Naive thymus-derived CD4-positive, alpha-beta T cell (primary cell): ENCODE measurements at regions of chr3 and their contacts with region 1.

Region 1: GRCh38 chr3:100463002-100463401 is 29.4 kb upstream of the TMEM45A start:
- DNase-seq: no peak
- ATAC-seq: peak; percentile 75
- H3K4me3 ChIP-seq: no peak overlapping the region
- H3K4me3 Mint-ChIP-seq: peak overlapping the region in 1 of 10 donors; percentile 18
- H3K27ac ChIP-seq: no peak overlapping the region
- H3K27ac Mint-ChIP-seq: no peak overlapping the region
- H3K4me1 ChIP-seq: no peaks in the 10 kb centered on the region
- H3K4me1 Mint-ChIP-seq: peaks cover 0 to 19% (median 0%) of the 10 kb centered on the region in 7 donors
- H3K27me3 ChIP-seq: no peaks in the 10 kb centered on the region
- H3K27me3 Mint-ChIP-seq: peaks cover 0 to 8% (median 3%) of the 10 kb centered on the region in 5 donors

Region 2: DNA sequence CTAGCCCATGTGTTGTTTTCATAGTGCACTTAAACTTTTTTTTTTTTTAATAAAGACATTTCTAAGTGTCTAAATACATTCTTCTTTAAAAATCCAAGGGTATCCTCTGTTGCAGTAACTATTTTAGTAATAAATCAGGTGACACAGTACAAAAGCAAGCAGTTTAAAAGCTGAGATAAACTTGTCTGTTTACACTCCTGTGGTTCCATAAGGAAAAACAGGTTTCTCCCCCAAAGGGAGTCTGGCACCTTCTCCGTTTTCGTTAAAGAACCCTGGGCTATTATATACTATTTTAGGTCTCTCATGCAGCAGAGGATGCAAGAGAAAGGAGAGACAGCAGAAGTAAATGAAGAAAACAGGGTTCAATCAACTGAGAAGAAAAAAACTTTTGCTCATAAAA is 13.8 kb before region 1 on chr3:
- CTCF ChIA-PET with region 1: no interaction called
- POLR2A ChIA-PET with region 1: no interaction called
- intact Hi-C with region 1: no loop called
- DNase-seq: no peak
- ATAC-seq: no peak
- H3K4me3 ChIP-seq: no peak overlapping the region
- H3K4me3 Mint-ChIP-seq: no peak overlapping the region
- H3K27ac ChIP-seq: no peak overlapping the region
- H3K27ac Mint-ChIP-seq: no peak overlapping the region
- H3K4me1 ChIP-seq: no peaks in the 10 kb centered on the region
- H3K4me1 Mint-ChIP-seq: no peaks in the 10 kb centered on the region
- H3K27me3 ChIP-seq: no peaks in the 10 kb centered on the region
- H3K27me3 Mint-ChIP-seq: no peaks in the 10 kb centered on the region

Region 3: DNA sequence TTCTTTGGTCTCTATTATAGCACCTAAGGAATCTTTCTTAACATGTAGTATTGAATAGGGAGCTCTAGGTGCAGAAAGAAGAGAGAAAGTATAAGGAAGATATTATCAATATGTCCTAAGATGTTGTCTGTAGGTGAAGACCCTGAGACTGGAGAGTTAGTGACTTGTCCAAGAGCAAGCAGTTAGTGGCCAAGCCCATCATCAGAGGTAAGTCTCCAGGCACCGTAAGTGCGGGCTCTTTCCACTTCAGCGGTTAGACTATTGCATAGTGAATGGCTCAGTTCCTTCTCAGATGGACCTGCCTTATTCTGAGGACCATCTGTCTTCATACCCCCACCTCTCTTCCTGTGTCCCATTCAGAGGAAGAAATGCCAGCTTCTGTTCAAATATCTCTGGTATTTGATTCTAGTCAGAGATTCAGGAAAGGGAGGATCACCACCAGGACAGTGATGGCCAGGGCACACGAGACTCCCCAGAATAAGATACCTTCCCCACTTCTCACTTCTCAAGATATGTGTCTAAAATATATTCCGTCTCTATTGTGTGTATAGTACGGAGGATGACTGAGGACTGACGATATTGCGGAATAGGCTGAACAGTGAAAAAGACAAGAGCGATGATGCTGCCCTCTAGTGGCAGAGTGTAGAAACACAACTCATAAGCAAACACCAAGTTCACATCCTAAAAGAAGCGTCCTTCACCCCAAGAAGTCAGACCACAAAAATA is 127.3 kb after region 1 on chr3:
- CTCF ChIA-PET with region 1: interaction called, 7 read pairs
- POLR2A ChIA-PET with region 1: no interaction called
- intact Hi-C with region 1: loop called (anchors 1 kb)
- DNase-seq: peak; percentile 24 to 73 (median 61)
- ATAC-seq: peak; percentile 98
- H3K4me3 ChIP-seq: no peak overlapping the region
- H3K4me3 Mint-ChIP-seq: peak overlapping the region in 7 of 10 donors; percentile 13 to 77 (median 60)
- H3K27ac ChIP-seq: no peak overlapping the region
- H3K27ac Mint-ChIP-seq: no peak overlapping the region
- H3K4me1 ChIP-seq: no peaks in the 10 kb centered on the region
- H3K4me1 Mint-ChIP-seq: peaks cover 0 to 8% (median 4%) of the 10 kb centered on the region in 7 donors
- H3K27me3 ChIP-seq: no peaks in the 10 kb centered on the region
- H3K27me3 Mint-ChIP-seq: peaks cover 0 to 12% (median 0%) of the 10 kb centered on the region in 5 donors

Region 4: GRCh38 chr3:100634493-100635272 is 171.7 kb after region 1 on chr3:
- CTCF ChIA-PET with region 1: no interaction called
- POLR2A ChIA-PET with region 1: no interaction called
- intact Hi-C with region 1: loop called in 1 of 2 experiments (anchors 2 kb)
- DNase-seq: peak in 3 of 9 donors; percentile 12 to 37 (median 30)
- ATAC-seq: peak; percentile 62
- H3K4me3 ChIP-seq: no peak overlapping the region
- H3K4me3 Mint-ChIP-seq: no peak overlapping the region
- H3K27ac ChIP-seq: no peak overlapping the region
- H3K27ac Mint-ChIP-seq: no peak overlapping the region
- H3K4me1 ChIP-seq: no peaks in the 10 kb centered on the region
- H3K4me1 Mint-ChIP-seq: peaks cover 0 to 7% (median 0%) of the 10 kb centered on the region in 7 donors
- H3K27me3 ChIP-seq: no peaks in the 10 kb centered on the region
- H3K27me3 Mint-ChIP-seq: peaks cover 7 to 29% (median 12%) of the 10 kb centered on the region in 5 donors

Region 5: GRCh38 chr3:100682056-100682853 is 219.3 kb after region 1 on chr3:
- CTCF ChIA-PET with region 1: no interaction called
- POLR2A ChIA-PET with region 1: no interaction called
- intact Hi-C with region 1: no loop called
- DNase-seq: no peak
- ATAC-seq: no peak
- H3K4me3 ChIP-seq: no peak overlapping the region
- H3K4me3 Mint-ChIP-seq: no peak overlapping the region
- H3K27ac ChIP-seq: no peak overlapping the region
- H3K27ac Mint-ChIP-seq: no peak overlapping the region
- H3K4me1 ChIP-seq: no peaks in the 10 kb centered on the region
- H3K4me1 Mint-ChIP-seq: no peaks in the 10 kb centered on the region
- H3K27me3 ChIP-seq: no peaks in the 10 kb centered on the region
- H3K27me3 Mint-ChIP-seq: peaks cover 0 to 18% (median 4%) of the 10 kb centered on the region in 5 donors

Region 6: GRCh38 chr3:100796556-100796955 is 333.6 kb after region 1 on chr3:
- CTCF ChIA-PET with region 1: no interaction called
- POLR2A ChIA-PET with region 1: no interaction called
- intact Hi-C with region 1: loop called in 1 of 2 experiments (anchors 1 kb)
- DNase-seq: peak in 1 of 9 donors; percentile 1
- ATAC-seq: no peak
- H3K4me3 ChIP-seq: no peak overlapping the region
- H3K4me3 Mint-ChIP-seq: peak overlapping the region in 6 of 10 donors; percentile 22 to 68 (median 48)
- H3K27ac ChIP-seq: no peak overlapping the region
- H3K27ac Mint-ChIP-seq: peak overlapping the region in 2 of 9 donors; percentile 43 to 51
- H3K4me1 ChIP-seq: no peaks in the 10 kb centered on the region
- H3K4me1 Mint-ChIP-seq: peaks cover 0 to 7% (median 5%) of the 10 kb centered on the region in 7 donors
- H3K27me3 ChIP-seq: no peaks in the 10 kb centered on the region
- H3K27me3 Mint-ChIP-seq: peaks cover 0 to 22% (median 0%) of the 10 kb centered on the region in 5 donors

Region 7: GRCh38 chr3:100928638-100929428 is 465.8 kb after region 1 on chr3:
- CTCF ChIA-PET with region 1: no interaction called
- POLR2A ChIA-PET with region 1: no interaction called
- intact Hi-C with region 1: no loop called
- DNase-seq: no peak
- ATAC-seq: no peak
- H3K4me3 ChIP-seq: no peak overlapping the region
- H3K4me3 Mint-ChIP-seq: no peak overlapping the region
- H3K27ac ChIP-seq: no peak overlapping the region
- H3K27ac Mint-ChIP-seq: no peak overlapping the region
- H3K4me1 ChIP-seq: no peaks in the 10 kb centered on the region
- H3K4me1 Mint-ChIP-seq: no peaks in the 10 kb centered on the region
- H3K27me3 ChIP-seq: no peaks in the 10 kb centered on the region
- H3K27me3 Mint-ChIP-seq: peaks cover 1 to 21% (median 5%) of the 10 kb centered on the region in 5 donors

Region 8: DNA sequence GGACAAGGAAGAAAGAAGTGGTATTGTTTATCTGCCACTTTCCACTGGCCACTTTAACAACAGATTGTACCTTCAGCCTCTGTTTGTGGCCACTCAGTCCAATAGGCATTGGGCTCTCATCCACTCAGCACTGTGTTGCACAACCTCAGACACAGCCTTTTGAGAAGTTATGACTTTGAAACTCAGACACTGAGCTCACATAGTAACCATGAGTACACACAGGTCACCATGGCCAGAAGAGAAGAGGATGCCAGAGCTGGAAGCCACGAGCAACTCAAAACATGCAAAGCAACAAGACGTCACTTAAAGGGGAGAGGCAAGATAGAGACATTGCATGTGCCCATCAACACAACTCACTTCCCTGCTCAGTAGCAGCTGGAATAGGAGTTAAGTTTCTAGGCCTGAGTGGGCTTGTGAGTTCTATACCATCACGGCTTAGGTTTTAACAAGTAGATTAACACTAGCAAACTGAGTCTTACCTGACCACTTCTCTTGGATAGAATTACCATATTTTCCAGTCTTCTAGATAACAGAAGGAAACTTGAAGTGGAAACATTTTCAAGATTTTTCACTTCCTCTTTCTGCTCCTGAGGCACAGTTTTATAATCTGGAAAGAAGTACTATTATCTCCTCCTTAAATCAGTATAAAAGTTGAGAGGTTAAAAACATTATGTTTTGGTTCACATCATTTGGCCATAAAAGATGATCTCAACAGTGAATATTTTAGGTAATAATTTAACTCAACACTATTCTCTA is 753.9 kb after region 1 on chr3:
- CTCF ChIA-PET with region 1: no interaction called
- POLR2A ChIA-PET with region 1: no interaction called
- intact Hi-C with region 1: no loop called
- DNase-seq: no peak
- ATAC-seq: no peak
- H3K4me3 ChIP-seq: no peak overlapping the region
- H3K4me3 Mint-ChIP-seq: no peak overlapping the region
- H3K27ac ChIP-seq: no peak overlapping the region
- H3K27ac Mint-ChIP-seq: no peak overlapping the region
- H3K4me1 ChIP-seq: no peaks in the 10 kb centered on the region
- H3K4me1 Mint-ChIP-seq: no peaks in the 10 kb centered on the region
- H3K27me3 ChIP-seq: no peaks in the 10 kb centered on the region
- H3K27me3 Mint-ChIP-seq: no peaks in the 10 kb centered on the region

Region 9: GRCh38 chr3:101381809-101382208 is 918.8 kb after region 1 on chr3:
- CTCF ChIA-PET with region 1: no interaction called
- POLR2A ChIA-PET with region 1: no interaction called
- intact Hi-C with region 1: loop called in 1 of 2 experiments (anchors 5 kb)
- DNase-seq: peak in 6 of 9 donors; percentile 10 to 42 (median 24)
- ATAC-seq: peak; percentile 69
- H3K4me3 ChIP-seq: no peak overlapping the region
- H3K4me3 Mint-ChIP-seq: no peak overlapping the region
- H3K27ac ChIP-seq: no peak overlapping the region
- H3K27ac Mint-ChIP-seq: peak overlapping the region in 1 of 9 donors; percentile 40
- H3K4me1 ChIP-seq: no peaks in the 10 kb centered on the region
- H3K4me1 Mint-ChIP-seq: peaks cover 31 to 89% (median 73%) of the 10 kb centered on the region in 7 donors
- H3K27me3 ChIP-seq: no peaks in the 10 kb centered on the region
- H3K27me3 Mint-ChIP-seq: no peaks in the 10 kb centered on the region